BJ (cell line): ENCODE measurements at regions of chr1 and their contacts with region 1.

Region 1: DNA sequence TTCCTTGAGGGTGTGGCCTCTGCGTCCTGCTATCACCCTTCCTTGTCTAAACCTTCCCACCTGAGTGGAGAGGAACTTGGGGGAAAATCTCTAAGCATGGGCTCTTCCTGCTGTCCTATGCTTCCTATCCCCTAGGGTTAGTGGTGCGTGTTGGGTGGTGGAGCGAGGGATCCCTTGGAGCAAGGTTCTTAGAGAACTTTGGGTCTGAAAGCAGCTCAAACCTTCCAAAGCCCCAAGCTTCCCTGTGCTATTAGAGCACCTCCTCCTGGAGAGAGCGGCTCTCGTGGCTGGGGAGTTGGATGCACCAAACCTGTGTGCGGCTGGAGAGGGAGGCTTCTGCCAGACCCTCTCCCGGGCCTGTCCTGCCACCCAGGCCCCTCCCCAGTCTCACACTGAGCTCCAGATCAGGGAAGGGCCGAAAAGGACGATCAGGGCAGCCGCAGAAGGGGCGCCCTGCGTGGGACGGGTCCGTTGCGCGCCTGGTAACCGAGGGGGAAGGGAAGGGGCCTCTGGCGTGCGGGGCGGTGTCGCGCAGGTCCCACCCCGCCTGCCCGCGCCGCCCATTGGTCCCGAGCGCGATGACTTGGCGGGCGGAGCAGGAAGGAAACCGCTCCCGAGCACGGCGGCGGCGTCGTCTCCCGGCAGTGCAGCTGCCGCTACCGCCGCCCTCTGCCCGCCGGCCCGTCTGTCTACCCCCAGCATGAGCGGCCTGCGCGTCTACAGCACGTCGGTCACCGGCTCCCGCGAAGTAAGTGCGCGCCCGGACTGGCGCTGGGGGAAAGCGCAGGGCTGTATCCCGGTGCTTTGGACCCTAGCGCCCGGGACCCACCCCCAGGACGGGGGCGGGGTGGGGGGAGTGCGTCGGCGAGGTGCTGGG is at the start of gene SH3BGRL3:
- DNase-seq: peak; percentile 35
- H3K4me3 ChIP-seq: peak within 1 kb of the TSS; percentile 81
- H3K27me3 ChIP-seq: no peaks in the 10 kb centered on the region
- CTCF ChIP-seq: peak; percentile 73
- polyA plus RNA-seq, gene SH3BGRL3: 298 and 309 TPM in 2 replicates

Region 2: GRCh38 chr1:25895365-25895993 is 384.2 kb before region 1 on chr1:
- CTCF ChIA-PET with region 1: no interaction called
- POLR2A ChIA-PET with region 1: no interaction called
- DNase-seq: peak; percentile 58
- H3K4me3 ChIP-seq: no peak overlapping the region
- H3K27me3 ChIP-seq: no peaks in the 10 kb centered on the region
- CTCF ChIP-seq: peak; percentile 98

Region 3: GRCh38 chr1:26218906-26219494 is 60.7 kb before region 1 on chr1:
- CTCF ChIA-PET with region 1: no interaction called
- POLR2A ChIA-PET with region 1: no interaction called
- DNase-seq: no peak
- H3K4me3 ChIP-seq: no peak overlapping the region
- H3K27me3 ChIP-seq: peaks cover 12% of the 10 kb centered on the region
- CTCF ChIP-seq: no peak

Region 4: GRCh38 chr1:26233903-26234643 is 45.6 kb before region 1 on chr1 and contains the start of gene CEP85:
- CTCF ChIA-PET with region 1: interaction called, 30 read pairs
- POLR2A ChIA-PET with region 1: no interaction called
- DNase-seq: peak; percentile 70
- H3K4me3 ChIP-seq: peak within 1 kb of the TSS; percentile 64
- H3K27me3 ChIP-seq: no peaks in the 10 kb centered on the region
- CTCF ChIP-seq: peak; percentile 91
- polyA plus RNA-seq, gene CEP85: 9.4 and 10.8 TPM in 2 replicates

Region 5: GRCh38 chr1:26259578-26259977 is 20.1 kb before region 1 on chr1:
- CTCF ChIA-PET with region 1: interaction called, 14 read pairs
- POLR2A ChIA-PET with region 1: no interaction called
- DNase-seq: no peak
- H3K4me3 ChIP-seq: no peak overlapping the region
- H3K27me3 ChIP-seq: no peaks in the 10 kb centered on the region
- CTCF ChIP-seq: no peak

Region 6: GRCh38 chr1:26265405-26265804 is 14.3 kb before region 1 on chr1:
- CTCF ChIA-PET with region 1: interaction called, 14 read pairs
- POLR2A ChIA-PET with region 1: no interaction called
- DNase-seq: no peak
- H3K4me3 ChIP-seq: no peak overlapping the region
- H3K27me3 ChIP-seq: no peaks in the 10 kb centered on the region
- CTCF ChIP-seq: no peak